ENCODE measurements at regions of chr7 and their contacts with region 1.

Region 1: GRCh38 chr7:27784393-27785053 is 44.6 kb downstream of the TAX1BP1 start:
- DNase-seq: peak in 7 of 9 donors; percentile 30 to 54 (median 43)
- ATAC-seq: peak; percentile 73
- H3K4me3 ChIP-seq: no peak overlapping the region
- H3K4me3 Mint-ChIP-seq: no peak overlapping the region
- H3K27ac ChIP-seq: no peak overlapping the region
- H3K27ac Mint-ChIP-seq: peak overlapping the region in 1 of 9 donors; percentile 15
- H3K4me1 ChIP-seq: no peaks in the 10 kb centered on the region
- H3K4me1 Mint-ChIP-seq: peaks cover 4 to 35% (median 20%) of the 10 kb centered on the region in 7 donors
- H3K27me3 ChIP-seq: no peaks in the 10 kb centered on the region
- H3K27me3 Mint-ChIP-seq: no peaks in the 10 kb centered on the region

Region 2: GRCh38 chr7:26880852-26881251 is 903.7 kb before region 1 on chr7:
- CTCF ChIA-PET with region 1: no interaction called
- POLR2A ChIA-PET with region 1: no interaction called
- intact Hi-C with region 1: no loop called
- DNase-seq: no peak
- ATAC-seq: no peak
- H3K4me3 ChIP-seq: no peak overlapping the region
- H3K4me3 Mint-ChIP-seq: no peak overlapping the region
- H3K27ac ChIP-seq: no peak overlapping the region
- H3K27ac Mint-ChIP-seq: no peak overlapping the region
- H3K4me1 ChIP-seq: no peaks in the 10 kb centered on the region
- H3K4me1 Mint-ChIP-seq: no peaks in the 10 kb centered on the region
- H3K27me3 ChIP-seq: no peaks in the 10 kb centered on the region
- H3K27me3 Mint-ChIP-seq: peaks cover 9 to 30% (median 20%) of the 10 kb centered on the region in 5 donors

Region 3: GRCh38 chr7:27739909-27740448 is 44.5 kb before region 1 on chr7 and contains the start of gene TAX1BP1:
- CTCF ChIA-PET with region 1: interaction called, 3 read pairs
- POLR2A ChIA-PET with region 1: interaction called, 4 read pairs
- intact Hi-C with region 1: loop called (anchors 2 to 5 kb)
- DNase-seq: peak; percentile 92 to 97 (median 95)
- ATAC-seq: peak; percentile 97
- H3K4me3 ChIP-seq: peak within 1 kb of the TSS; percentile 91
- H3K4me3 Mint-ChIP-seq: peak within 1 kb of the TSS; percentile 81 to 99 (median 97)
- H3K27ac ChIP-seq: peak within 1 kb of the TSS; percentile 87
- H3K27ac Mint-ChIP-seq: peak within 1 kb of the TSS; percentile 76 to 99 (median 93)
- H3K4me1 ChIP-seq: peaks cover 6 to 24% of the 10 kb centered on the region in 2 donors
- H3K4me1 Mint-ChIP-seq: peaks cover 27 to 51% (median 44%) of the 10 kb centered on the region in 7 donors
- H3K27me3 ChIP-seq: no peaks in the 10 kb centered on the region
- H3K27me3 Mint-ChIP-seq: peaks cover 0 to 9% (median 0%) of the 10 kb centered on the region in 5 donors
- total RNA-seq, gene TAX1BP1: 69.4 to 111 (median 108) TPM

Region 4: GRCh38 chr7:27763983-27764516 is 20.5 kb before region 1 on chr7:
- CTCF ChIA-PET with region 1: interaction called, 3 read pairs
- POLR2A ChIA-PET with region 1: no interaction called
- intact Hi-C with region 1: loop called in 1 of 2 experiments (anchors 2 kb)
- DNase-seq: no peak
- ATAC-seq: no peak
- H3K4me3 ChIP-seq: no peak overlapping the region
- H3K4me3 Mint-ChIP-seq: peak overlapping the region in 1 of 10 donors; percentile 7
- H3K27ac ChIP-seq: no peak overlapping the region
- H3K27ac Mint-ChIP-seq: peak overlapping the region in 2 of 9 donors; percentile 6 to 40
- H3K4me1 ChIP-seq: no peaks in the 10 kb centered on the region
- H3K4me1 Mint-ChIP-seq: peaks cover 4 to 56% (median 45%) of the 10 kb centered on the region in 7 donors
- H3K27me3 ChIP-seq: no peaks in the 10 kb centered on the region
- H3K27me3 Mint-ChIP-seq: no peaks in the 10 kb centered on the region

Region 5: GRCh38 chr7:27825891-27826290 is 41.4 kb after region 1 on chr7:
- CTCF ChIA-PET with region 1: no interaction called
- POLR2A ChIA-PET with region 1: no interaction called
- intact Hi-C with region 1: loop called in 1 of 2 experiments (anchors 2 kb)
- DNase-seq: no peak
- ATAC-seq: no peak
- H3K4me3 ChIP-seq: no peak overlapping the region
- H3K4me3 Mint-ChIP-seq: no peak overlapping the region
- H3K27ac ChIP-seq: no peak overlapping the region
- H3K27ac Mint-ChIP-seq: peak overlapping the region in 2 of 9 donors; percentile 7 to 41
- H3K4me1 ChIP-seq: no peaks in the 10 kb centered on the region
- H3K4me1 Mint-ChIP-seq: peaks cover 0 to 4% (median 0%) of the 10 kb centered on the region in 7 donors
- H3K27me3 ChIP-seq: no peaks in the 10 kb centered on the region
- H3K27me3 Mint-ChIP-seq: no peaks in the 10 kb centered on the region

Region 6: GRCh38 chr7:27875061-27875460 is 90.5 kb after region 1 on chr7:
- CTCF ChIA-PET with region 1: no interaction called
- POLR2A ChIA-PET with region 1: no interaction called
- intact Hi-C with region 1: no loop called
- DNase-seq: no peak
- ATAC-seq: no peak
- H3K4me3 ChIP-seq: no peak overlapping the region
- H3K4me3 Mint-ChIP-seq: no peak overlapping the region
- H3K27ac ChIP-seq: no peak overlapping the region
- H3K27ac Mint-ChIP-seq: peak overlapping the region in 1 of 9 donors; percentile 43
- H3K4me1 ChIP-seq: no peaks in the 10 kb centered on the region
- H3K4me1 Mint-ChIP-seq: peaks cover 0 to 4% (median 0%) of the 10 kb centered on the region in 7 donors
- H3K27me3 ChIP-seq: no peaks in the 10 kb centered on the region
- H3K27me3 Mint-ChIP-seq: no peaks in the 10 kb centered on the region